Naive thymus-derived CD4-positive, alpha-beta T cell (primary cell): ENCODE measurements at regions of chr17 and their contacts with region 1.

Region 1: GRCh38 chr17:66301797-66302741 is at the start of gene PRKCA:
- DNase-seq: peak; percentile 59 to 85 (median 71)
- ATAC-seq: peak; percentile 91
- H3K4me3 ChIP-seq: peak within 1 kb of the TSS; percentile 61
- H3K4me3 Mint-ChIP-seq: peak within 1 kb of the TSS; percentile 96 to 100 (median 99)
- H3K27ac ChIP-seq: peak within 1 kb of the TSS; percentile 75
- H3K27ac Mint-ChIP-seq: peak within 1 kb of the TSS; percentile 92 to 98 (median 96)
- H3K4me1 ChIP-seq: peaks cover 7 to 21% of the 10 kb centered on the region in 2 donors
- H3K4me1 Mint-ChIP-seq: peaks cover 29 to 68% (median 59%) of the 10 kb centered on the region in 7 donors
- H3K27me3 ChIP-seq: no peaks in the 10 kb centered on the region
- H3K27me3 Mint-ChIP-seq: peaks cover 0 to 9% (median 0%) of the 10 kb centered on the region in 5 donors
- total RNA-seq, gene PRKCA: 94.1 to 186 (median 154) TPM

Region 2: GRCh38 chr17:66191593-66192382 is 110.3 kb before region 1 on chr17 and contains the start of gene CEP112:
- CTCF ChIA-PET with region 1: no interaction called
- POLR2A ChIA-PET with region 1: no interaction called
- intact Hi-C with region 1: loop called in 1 of 2 experiments (anchors 1 kb)
- DNase-seq: peak; percentile 71 to 88 (median 77)
- ATAC-seq: peak; percentile 95
- H3K4me3 ChIP-seq: peak within 1 kb of the TSS; percentile 67
- H3K4me3 Mint-ChIP-seq: peak within 1 kb of the TSS; percentile 78 to 89 (median 84)
- H3K27ac ChIP-seq: peak within 1 kb of the TSS; percentile 69
- H3K27ac Mint-ChIP-seq: peak within 1 kb of the TSS; percentile 80 to 97 (median 87)
- H3K4me1 ChIP-seq: peaks cover 5 to 12% of the 10 kb centered on the region in 2 donors
- H3K4me1 Mint-ChIP-seq: peaks cover 6 to 18% (median 16%) of the 10 kb centered on the region in 7 donors
- H3K27me3 ChIP-seq: no peaks in the 10 kb centered on the region
- H3K27me3 Mint-ChIP-seq: peaks cover 0 to 10% (median 0%) of the 10 kb centered on the region in 5 donors
- total RNA-seq, gene CEP112: 0.46 to 2.5 (median 0.76) TPM

Region 3: GRCh38 chr17:66230922-66231591 is 71.0 kb before region 1 on chr17:
- CTCF ChIA-PET with region 1: no interaction called
- POLR2A ChIA-PET with region 1: no interaction called
- intact Hi-C with region 1: no loop called
- DNase-seq: no peak
- ATAC-seq: no peak
- H3K4me3 ChIP-seq: no peak overlapping the region
- H3K4me3 Mint-ChIP-seq: no peak overlapping the region
- H3K27ac ChIP-seq: no peak overlapping the region
- H3K27ac Mint-ChIP-seq: no peak overlapping the region
- H3K4me1 ChIP-seq: no peaks in the 10 kb centered on the region
- H3K4me1 Mint-ChIP-seq: peaks cover 3 to 12% (median 10%) of the 10 kb centered on the region in 7 donors
- H3K27me3 ChIP-seq: no peaks in the 10 kb centered on the region
- H3K27me3 Mint-ChIP-seq: peaks cover 0 to 17% (median 0%) of the 10 kb centered on the region in 5 donors

Region 4: GRCh38 chr17:66255112-66255511 is 47.0 kb before region 1 on chr17:
- CTCF ChIA-PET with region 1: interaction called, 3 read pairs
- POLR2A ChIA-PET with region 1: interaction called, 4 read pairs
- intact Hi-C with region 1: loop called (anchors 1 to 5 kb)
- DNase-seq: peak in 7 of 9 donors; percentile 60 to 80 (median 73)
- ATAC-seq: peak; percentile 92
- H3K4me3 ChIP-seq: peak overlapping the region; percentile 1
- H3K4me3 Mint-ChIP-seq: peak overlapping the region; percentile 30 to 80 (median 65)
- H3K27ac ChIP-seq: peak overlapping the region; percentile 52
- H3K27ac Mint-ChIP-seq: peak overlapping the region; percentile 44 to 93 (median 89)
- H3K4me1 ChIP-seq: peaks cover 5 to 17% of the 10 kb centered on the region in 2 donors
- H3K4me1 Mint-ChIP-seq: peaks cover 8 to 34% (median 24%) of the 10 kb centered on the region in 7 donors
- H3K27me3 ChIP-seq: no peaks in the 10 kb centered on the region
- H3K27me3 Mint-ChIP-seq: no peaks in the 10 kb centered on the region

Region 5: GRCh38 chr17:66322764-66323163 is 20.7 kb after region 1 on chr17:
- CTCF ChIA-PET with region 1: interaction called, 6 read pairs
- POLR2A ChIA-PET with region 1: interaction called, 16 read pairs
- intact Hi-C with region 1: no loop called
- DNase-seq: no peak
- ATAC-seq: no peak
- H3K4me3 ChIP-seq: no peak overlapping the region
- H3K4me3 Mint-ChIP-seq: peak overlapping the region in 2 of 10 donors; percentile 17 to 29
- H3K27ac ChIP-seq: no peak overlapping the region
- H3K27ac Mint-ChIP-seq: peak overlapping the region in 7 of 9 donors; percentile 20 to 92 (median 78)
- H3K4me1 ChIP-seq: peaks cover 0 to 28% of the 10 kb centered on the region in 2 donors
- H3K4me1 Mint-ChIP-seq: peaks cover 16 to 74% (median 58%) of the 10 kb centered on the region in 7 donors
- H3K27me3 ChIP-seq: no peaks in the 10 kb centered on the region
- H3K27me3 Mint-ChIP-seq: no peaks in the 10 kb centered on the region

Region 6: GRCh38 chr17:66364990-66365490 is 63.0 kb after region 1 on chr17:
- CTCF ChIA-PET with region 1: no interaction called
- POLR2A ChIA-PET with region 1: no interaction called
- intact Hi-C with region 1: loop called in 1 of 2 experiments (anchors 2 kb)
- DNase-seq: no peak
- ATAC-seq: no peak
- H3K4me3 ChIP-seq: no peak overlapping the region
- H3K4me3 Mint-ChIP-seq: peak overlapping the region in 9 of 10 donors; percentile 15 to 70 (median 52)
- H3K27ac ChIP-seq: no peak overlapping the region
- H3K27ac Mint-ChIP-seq: peak overlapping the region; percentile 7 to 83 (median 63)
- H3K4me1 ChIP-seq: peaks cover 0 to 45% of the 10 kb centered on the region in 2 donors
- H3K4me1 Mint-ChIP-seq: peaks cover 52 to 97% (median 91%) of the 10 kb centered on the region in 7 donors
- H3K27me3 ChIP-seq: no peaks in the 10 kb centered on the region
- H3K27me3 Mint-ChIP-seq: no peaks in the 10 kb centered on the region

Region 7: DNA sequence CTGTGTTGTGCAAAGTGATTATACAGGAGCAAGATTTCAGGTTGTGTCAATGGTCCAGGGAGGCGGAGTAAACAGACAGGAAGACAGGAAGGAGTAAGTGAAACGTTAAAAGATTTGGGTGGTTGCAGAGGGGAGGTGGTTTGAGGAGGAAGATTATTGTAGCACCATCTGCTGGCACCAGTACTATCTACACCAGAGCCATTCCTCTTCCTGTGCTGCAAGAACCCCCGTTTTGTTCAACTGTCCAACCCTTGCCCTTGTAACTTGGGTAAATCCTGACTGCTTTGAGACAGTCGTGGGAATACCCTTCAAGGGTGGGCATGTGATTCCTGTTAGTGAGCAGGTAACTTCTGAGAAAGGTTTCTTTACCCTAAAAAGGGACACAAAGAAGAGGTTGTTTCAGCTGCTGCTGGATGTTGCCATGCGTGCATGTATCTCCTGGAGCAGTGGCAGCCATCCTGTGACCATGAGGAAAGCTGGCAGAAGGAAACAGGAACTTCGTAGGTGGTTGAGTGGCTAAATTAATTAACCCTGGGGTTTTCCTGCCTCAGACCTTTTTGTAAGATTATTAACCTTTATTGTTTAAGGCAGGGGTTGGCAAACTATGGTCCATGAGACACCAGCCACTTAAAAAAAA is 124.4 kb after region 1 on chr17:
- CTCF ChIA-PET with region 1: no interaction called
- POLR2A ChIA-PET with region 1: interaction called, 3 read pairs
- intact Hi-C with region 1: loop called (anchors 1 to 2 kb)
- DNase-seq: peak in 8 of 9 donors; percentile 31 to 74 (median 64)
- ATAC-seq: peak; percentile 94
- H3K4me3 ChIP-seq: no peak overlapping the region
- H3K4me3 Mint-ChIP-seq: peak overlapping the region in 9 of 10 donors; percentile 4 to 68 (median 47)
- H3K27ac ChIP-seq: peak overlapping the region; percentile 30
- H3K27ac Mint-ChIP-seq: peak overlapping the region; percentile 56 to 91 (median 79)
- H3K4me1 ChIP-seq: peaks cover 0 to 28% of the 10 kb centered on the region in 2 donors
- H3K4me1 Mint-ChIP-seq: peaks cover 54 to 81% (median 72%) of the 10 kb centered on the region in 7 donors
- H3K27me3 ChIP-seq: no peaks in the 10 kb centered on the region
- H3K27me3 Mint-ChIP-seq: no peaks in the 10 kb centered on the region

Region 8: DNA sequence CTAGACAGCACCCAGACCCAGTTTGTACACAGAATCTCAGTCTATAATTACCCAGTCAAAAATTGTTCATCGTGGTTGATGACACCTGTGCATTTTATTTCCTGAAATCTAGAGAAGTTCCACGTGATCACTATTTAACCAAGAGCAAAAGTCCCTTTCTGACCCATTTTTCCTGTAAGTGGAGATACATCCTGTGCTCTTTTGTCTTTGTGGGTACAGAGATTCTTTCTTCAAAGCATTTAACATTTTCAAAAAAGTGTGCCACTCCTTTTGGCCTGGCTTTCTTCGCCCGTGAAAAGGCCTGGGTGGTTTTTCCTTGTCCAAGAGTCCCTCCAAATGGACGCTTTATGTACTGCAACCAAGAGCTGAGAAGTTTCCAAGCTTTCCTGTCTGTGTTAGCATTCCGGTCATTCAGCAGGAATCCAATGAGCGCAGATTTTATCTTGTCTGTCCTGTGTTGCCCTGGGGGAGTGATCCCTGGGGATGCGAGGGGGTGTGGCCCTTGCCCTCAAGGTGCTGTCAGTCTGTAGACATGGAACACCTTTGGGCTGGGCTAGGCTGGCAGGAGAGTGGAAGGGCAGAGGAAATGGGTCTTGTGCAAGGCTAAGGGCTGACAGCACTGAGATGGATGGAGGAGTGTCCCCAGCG is 371.7 kb after region 1 on chr17:
- CTCF ChIA-PET with region 1: no interaction called
- POLR2A ChIA-PET with region 1: no interaction called
- intact Hi-C with region 1: loop called in 1 of 2 experiments (anchors 5 kb)
- DNase-seq: peak in 8 of 9 donors; percentile 32 to 87 (median 78)
- ATAC-seq: peak; percentile 92
- H3K4me3 ChIP-seq: no peak overlapping the region
- H3K4me3 Mint-ChIP-seq: peak overlapping the region; percentile 39 to 84 (median 74)
- H3K27ac ChIP-seq: peak overlapping the region; percentile 59
- H3K27ac Mint-ChIP-seq: peak overlapping the region; percentile 88 to 98 (median 92)
- H3K4me1 ChIP-seq: peaks cover 18 to 45% of the 10 kb centered on the region in 2 donors
- H3K4me1 Mint-ChIP-seq: peaks cover 38 to 79% (median 64%) of the 10 kb centered on the region in 7 donors
- H3K27me3 ChIP-seq: no peaks in the 10 kb centered on the region
- H3K27me3 Mint-ChIP-seq: no peaks in the 10 kb centered on the region

Region 9: DNA sequence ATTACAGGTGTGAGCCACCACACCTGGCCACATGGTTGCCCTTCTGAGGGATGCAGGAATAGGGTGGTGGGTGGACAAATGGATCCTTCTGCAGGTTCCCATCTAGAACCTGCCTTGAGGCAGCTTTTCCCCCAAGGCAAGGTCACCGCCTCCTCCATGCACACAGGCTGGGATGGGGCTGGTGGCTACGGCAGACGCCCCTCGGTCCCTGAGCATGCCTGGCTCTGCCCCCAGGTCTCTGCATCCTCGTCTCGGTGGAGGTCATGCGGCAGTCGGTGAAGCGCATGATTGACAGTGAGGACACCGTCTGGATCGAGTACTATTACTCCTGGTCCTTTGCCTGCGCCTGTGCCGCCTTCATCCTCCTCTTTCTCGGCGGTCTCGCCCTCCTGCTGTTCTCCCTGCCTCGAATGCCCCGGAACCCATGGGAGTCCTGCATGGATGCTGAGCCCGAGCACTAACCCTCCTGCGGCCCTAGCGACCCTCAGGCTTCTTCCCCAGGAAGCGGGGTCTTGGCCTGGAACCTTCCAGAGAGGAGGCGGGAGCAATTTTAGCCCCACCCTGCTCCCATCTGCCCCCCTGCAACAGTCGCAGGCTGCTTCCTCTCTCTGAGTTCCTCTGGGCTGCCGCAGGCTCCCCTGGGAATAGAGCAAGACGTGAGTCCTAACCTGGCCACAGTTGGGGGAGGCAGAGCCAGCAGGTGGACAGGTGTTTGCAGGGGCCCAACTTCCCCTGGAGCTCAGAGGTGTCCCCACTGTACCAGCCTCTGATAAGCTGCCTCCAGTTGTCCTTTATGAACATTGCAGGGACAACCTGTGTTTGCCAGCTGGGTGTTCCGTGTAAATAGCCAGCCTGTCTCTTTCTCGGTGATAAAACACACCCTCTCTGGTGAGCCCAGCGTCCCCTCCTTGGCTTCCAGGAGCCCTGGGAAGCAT is 754.0 kb after region 1 on chr17:
- CTCF ChIA-PET with region 1: no interaction called
- POLR2A ChIA-PET with region 1: no interaction called
- intact Hi-C with region 1: no loop called
- DNase-seq: no peak
- ATAC-seq: no peak
- H3K4me3 ChIP-seq: no peak overlapping the region
- H3K4me3 Mint-ChIP-seq: no peak overlapping the region
- H3K27ac ChIP-seq: no peak overlapping the region
- H3K27ac Mint-ChIP-seq: no peak overlapping the region
- H3K4me1 ChIP-seq: no peaks in the 10 kb centered on the region
- H3K4me1 Mint-ChIP-seq: no peaks in the 10 kb centered on the region
- H3K27me3 ChIP-seq: no peaks in the 10 kb centered on the region
- H3K27me3 Mint-ChIP-seq: no peaks in the 10 kb centered on the region